ENCODE measurements at regions of chr12 and their contacts with region 1.

Region 1: DNA sequence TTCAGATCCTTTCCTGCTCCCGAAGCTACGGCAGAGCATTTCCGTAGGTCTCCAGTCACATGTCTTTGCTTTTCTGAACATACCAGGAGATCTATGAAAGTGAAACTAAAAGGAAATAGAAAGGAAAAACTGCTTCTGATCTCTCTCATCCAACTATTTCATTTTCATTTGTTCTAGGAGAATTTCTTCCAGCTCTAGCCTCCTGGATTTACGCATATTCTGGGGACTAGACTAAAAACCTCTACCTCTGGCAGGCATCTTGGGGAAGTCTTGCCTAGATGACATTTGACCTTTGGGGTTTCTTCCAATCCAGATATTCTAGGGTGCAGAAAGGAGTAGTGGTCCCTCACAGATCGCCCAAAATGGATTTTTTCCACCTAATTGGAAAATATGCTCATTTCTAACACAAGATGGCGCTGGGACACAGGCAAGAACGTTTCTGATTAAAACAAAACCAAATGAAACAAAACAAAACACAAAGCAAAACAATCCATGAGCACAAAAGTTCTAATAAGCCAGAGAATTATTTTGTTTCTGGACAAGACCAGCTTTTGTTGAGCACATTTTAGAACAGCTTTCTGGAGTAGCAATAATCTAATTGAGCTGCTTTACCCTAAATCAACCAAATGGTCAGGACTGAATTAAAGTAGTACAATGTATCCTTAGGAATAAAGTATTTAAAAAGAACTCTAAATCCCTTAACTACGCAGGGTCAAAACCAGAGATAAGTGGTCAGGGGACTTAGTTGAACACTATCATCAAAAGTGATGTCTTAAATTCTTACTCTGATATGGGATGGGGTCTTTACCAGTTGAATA is 12.3 kb upstream of the PARP11 start:
- DNase-seq: peak; percentile 35 to 43
- H3K4me3 ChIP-seq: no peak overlapping the region
- H3K4me1 ChIP-seq: peaks cover 2% of the 10 kb centered on the region
- H3K27me3 ChIP-seq: no peaks in the 10 kb centered on the region

Region 2: DNA sequence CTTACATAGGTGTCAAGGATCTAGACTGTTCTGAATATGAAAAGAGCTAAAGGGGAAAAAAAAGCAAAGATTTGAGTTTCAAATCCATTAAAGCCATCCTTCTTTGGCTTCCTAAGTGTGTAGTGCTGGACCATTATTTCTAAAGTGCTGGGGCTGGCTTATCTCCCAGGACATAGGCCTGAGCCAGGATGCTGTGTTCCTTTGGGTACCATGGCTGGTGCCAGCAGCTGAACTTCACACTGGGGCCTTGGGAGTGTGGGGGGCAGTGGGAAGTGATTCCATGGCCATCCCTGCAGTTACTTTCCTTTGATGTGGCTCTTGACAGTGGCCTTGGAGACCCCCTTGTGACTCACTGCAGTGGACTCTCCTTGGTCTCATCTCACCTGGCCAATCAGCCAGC is 373.7 kb before region 1 on chr12:
- in situ Hi-C with region 1: no loop called
- DNase-seq: no peak
- H3K4me3 ChIP-seq: no peak overlapping the region
- H3K4me1 ChIP-seq: no peaks in the 10 kb centered on the region
- H3K27me3 ChIP-seq: peaks cover 4% of the 10 kb centered on the region; the same call in 1 of the 2 replicates

Region 3: DNA sequence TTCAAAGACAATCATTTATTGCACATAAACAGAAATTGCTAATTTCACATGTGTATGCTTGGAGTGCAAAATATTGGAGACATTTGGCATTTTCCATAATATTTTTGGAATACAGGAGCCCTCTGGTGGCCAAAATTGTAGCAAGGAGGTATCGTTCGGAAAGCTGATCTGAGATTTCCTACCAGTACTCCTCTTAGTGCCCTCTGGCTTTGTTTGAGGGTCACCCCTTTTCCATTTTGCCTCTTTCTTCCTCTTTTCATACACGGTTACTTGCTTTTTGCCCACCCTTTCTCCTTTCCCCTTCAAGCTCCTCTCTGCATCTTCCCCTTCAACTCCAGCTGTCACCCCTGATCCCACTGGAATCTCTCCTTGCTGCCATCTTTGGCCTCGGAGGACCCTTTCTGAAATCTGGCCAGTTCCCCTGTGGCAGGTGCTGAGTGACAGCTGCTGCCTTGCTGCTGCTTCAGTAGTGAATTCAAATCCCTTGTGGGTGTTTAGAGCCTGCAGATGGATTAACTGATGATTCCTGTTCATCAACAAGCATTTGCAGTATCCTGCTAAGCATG is 152.3 kb after region 1 on chr12:
- in situ Hi-C with region 1: loop called (anchors 5 kb)
- DNase-seq: peak; percentile 34 to 66
- H3K4me3 ChIP-seq: no peak overlapping the region
- H3K4me1 ChIP-seq: peaks cover 6% of the 10 kb centered on the region; the same call in 1 of the 2 replicates
- H3K27me3 ChIP-seq: peaks cover 9% of the 10 kb centered on the region

Region 4: GRCh38 chr12:4276524-4277204 is 391.2 kb after region 1 on chr12:
- in situ Hi-C with region 1: loop called (anchors 5 kb)
- DNase-seq: peak; percentile 68 to 88
- H3K4me3 ChIP-seq: no peak overlapping the region
- H3K4me1 ChIP-seq: peaks cover 11% of the 10 kb centered on the region
- H3K27me3 ChIP-seq: peaks cover 51% of the 10 kb centered on the region

Measured in HAP-1 (cell line).